ENCODE measurements at regions of chr22 and their contacts with region 1.

Region 1: GRCh38 chr22:38766076-38766777 is 10.4 kb upstream of the SUN2 start:
- DNase-seq: peak in 2 of 3 donors; percentile 37 to 48
- H3K4me3 ChIP-seq: no peak overlapping the region
- H3K27ac ChIP-seq: no peak overlapping the region
- H3K4me1 ChIP-seq: peaks cover 0 to 10% (median 9%) of the 10 kb centered on the region in 4 experiments
- H3K27me3 ChIP-seq: no peaks in the 10 kb centered on the region

Region 2: DNA sequence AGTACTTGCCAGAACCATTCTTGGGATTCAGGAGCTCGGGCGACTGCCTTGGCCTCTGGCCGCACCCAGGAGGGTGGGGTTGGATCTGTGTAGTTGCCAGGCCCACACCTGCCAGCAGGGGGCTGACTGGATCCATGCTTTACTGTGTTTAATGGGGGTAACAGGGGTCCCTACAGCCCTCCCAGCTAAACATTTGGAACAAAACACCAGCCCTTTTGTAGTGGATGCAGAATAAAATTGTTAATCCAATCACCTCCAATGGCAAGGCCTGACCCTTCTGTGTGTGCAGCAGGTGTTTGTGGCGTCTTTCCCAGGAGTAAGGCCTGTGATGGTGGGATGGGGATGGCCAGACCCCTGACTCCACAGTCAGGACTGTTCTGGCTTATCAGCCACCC is 32.9 kb before region 1 on chr22:
- CTCF ChIA-PET with region 1: interaction called, 18 read pairs
- POLR2A ChIA-PET with region 1: interaction called, 3 read pairs
- DNase-seq: peak in 2 of 3 donors; percentile 43 to 54
- H3K4me3 ChIP-seq: no peak overlapping the region
- H3K27ac ChIP-seq: no peak overlapping the region
- H3K4me1 ChIP-seq: peaks cover 0 to 21% (median 3%) of the 10 kb centered on the region in 4 experiments
- H3K27me3 ChIP-seq: no peaks in the 10 kb centered on the region

Region 3: DNA sequence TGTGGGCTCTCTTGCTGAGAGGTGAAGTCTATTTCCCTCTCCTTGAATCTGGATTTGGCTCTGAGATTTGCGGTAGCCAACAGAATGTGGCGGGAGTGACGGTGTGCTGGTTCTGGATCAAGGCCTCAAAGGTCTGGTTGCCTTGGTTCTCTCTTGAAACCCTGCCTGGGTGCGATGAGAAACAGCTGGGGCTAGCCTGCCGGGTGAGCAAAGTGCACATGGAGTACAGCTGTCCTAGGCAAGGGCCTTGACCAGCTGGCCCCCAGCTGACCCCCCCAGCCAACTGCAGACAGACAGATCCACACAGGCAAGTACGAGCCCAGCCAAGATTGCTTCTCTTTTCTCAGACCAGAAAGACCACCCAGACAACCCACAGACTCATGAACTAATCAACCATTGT is 21.2 kb before region 1 on chr22:
- CTCF ChIA-PET with region 1: interaction called, 28 read pairs
- POLR2A ChIA-PET with region 1: no interaction called
- DNase-seq: no peak
- H3K4me3 ChIP-seq: no peak overlapping the region
- H3K27ac ChIP-seq: no peak overlapping the region
- H3K4me1 ChIP-seq: peaks cover 0 to 3% (median under 1%) of the 10 kb centered on the region in 4 experiments
- H3K27me3 ChIP-seq: no peaks in the 10 kb centered on the region

Region 4: DNA sequence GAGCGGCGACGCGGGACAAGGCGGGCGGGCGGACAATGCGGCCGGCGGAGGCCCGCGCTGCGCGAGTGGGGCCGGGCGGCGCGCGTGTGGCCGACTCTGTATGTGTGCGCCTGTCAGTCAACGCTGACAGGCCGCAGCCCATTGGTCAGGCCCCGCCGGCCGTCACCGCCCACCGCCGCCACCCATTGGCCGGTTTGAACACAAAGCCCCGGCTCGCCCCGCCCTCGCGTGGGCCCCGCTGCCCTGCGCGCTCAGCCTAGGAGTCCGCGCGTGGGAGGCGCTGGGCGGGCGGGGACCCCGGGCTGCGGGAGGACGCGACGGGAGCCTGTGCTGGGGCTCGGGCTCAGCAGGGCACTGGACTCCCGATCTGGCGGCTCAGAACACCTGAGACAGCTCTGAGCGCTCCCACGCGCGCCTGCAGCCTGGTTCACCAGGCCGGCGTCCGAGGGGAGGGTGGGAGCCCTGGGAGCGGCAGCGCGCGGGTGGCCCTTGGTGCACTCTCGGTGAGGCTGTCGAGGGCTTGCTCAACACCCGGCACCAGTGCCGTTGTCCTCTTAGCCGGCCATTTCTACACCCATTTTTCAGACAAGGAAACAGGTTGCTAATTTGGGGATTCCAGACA is 10.2 kb before region 1 on chr22 and contains the start of gene SUN2:
- CTCF ChIA-PET with region 1: interaction called, 29 read pairs
- POLR2A ChIA-PET with region 1: no interaction called
- DNase-seq: peak; percentile 83 to 92 (median 87)
- H3K4me3 ChIP-seq: peak within 1 kb of the TSS; percentile 69 to 93 (median 84)
- H3K27ac ChIP-seq: peak within 1 kb of the TSS; percentile 50 to 79
- H3K4me1 ChIP-seq: peaks cover 16 to 74% (median 60%) of the 10 kb centered on the region in 4 experiments
- H3K27me3 ChIP-seq: no peaks in the 10 kb centered on the region

Region 5: DNA sequence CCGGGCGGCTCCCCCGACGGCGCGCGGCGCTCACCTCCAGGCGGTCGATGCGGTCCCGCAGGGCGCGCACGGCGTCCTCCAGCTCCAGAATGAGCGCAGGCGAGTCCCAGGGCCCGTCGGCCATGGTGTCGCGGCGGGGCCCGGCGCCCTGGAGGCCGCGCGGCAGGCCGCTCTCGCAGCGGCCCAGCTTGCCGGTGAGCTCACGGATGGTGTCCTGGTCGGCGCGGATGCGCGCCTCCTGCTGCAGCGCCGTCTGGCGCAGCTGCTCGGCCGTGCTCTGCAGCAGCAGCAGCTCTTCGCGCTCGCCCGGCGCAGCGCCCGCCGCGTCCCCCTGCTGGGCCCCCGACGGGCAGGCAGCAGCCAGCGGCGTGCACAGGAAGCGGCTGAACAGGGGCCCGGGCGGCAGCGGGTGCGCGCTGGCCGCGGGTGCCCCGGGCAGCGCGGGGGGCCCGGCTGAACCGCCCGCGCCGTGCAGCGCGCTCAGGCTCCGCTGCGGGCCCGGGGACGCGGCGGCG is 77.0 kb after region 1 on chr22:
- CTCF ChIA-PET with region 1: interaction called, 10 read pairs
- POLR2A ChIA-PET with region 1: no interaction called
- DNase-seq: peak; percentile 78 to 89 (median 87)
- H3K4me3 ChIP-seq: peak overlapping the region; percentile 11 to 68 (median 53)
- H3K27ac ChIP-seq: no peak overlapping the region
- H3K4me1 ChIP-seq: peaks cover 0 to 21% (median 15%) of the 10 kb centered on the region in 4 experiments
- H3K27me3 ChIP-seq: peaks cover 0 to 41% (median 35%) of the 10 kb centered on the region in 5 experiments

Region 6: GRCh38 chr22:38872172-38872830 is 106.1 kb after region 1 on chr22 and contains the start of gene CBX6:
- CTCF ChIA-PET with region 1: interaction called, 10 read pairs
- POLR2A ChIA-PET with region 1: no interaction called
- DNase-seq: peak; percentile 92 to 96 (median 95)
- H3K4me3 ChIP-seq: peak within 1 kb of the TSS; percentile 64 to 87 (median 84)
- H3K27ac ChIP-seq: peak within 1 kb of the TSS; percentile 72 to 82
- H3K4me1 ChIP-seq: peaks cover 5 to 37% (median 25%) of the 10 kb centered on the region in 4 experiments
- H3K27me3 ChIP-seq: peaks cover 0 to 4% (median 0%) of the 10 kb centered on the region in 5 experiments

Measured in common myeloid progenitor, CD34-positive (primary cell).